GM12878 (cell line): ENCODE measurements at regions of chr7 and their contacts with region 1.

Region 1: DNA sequence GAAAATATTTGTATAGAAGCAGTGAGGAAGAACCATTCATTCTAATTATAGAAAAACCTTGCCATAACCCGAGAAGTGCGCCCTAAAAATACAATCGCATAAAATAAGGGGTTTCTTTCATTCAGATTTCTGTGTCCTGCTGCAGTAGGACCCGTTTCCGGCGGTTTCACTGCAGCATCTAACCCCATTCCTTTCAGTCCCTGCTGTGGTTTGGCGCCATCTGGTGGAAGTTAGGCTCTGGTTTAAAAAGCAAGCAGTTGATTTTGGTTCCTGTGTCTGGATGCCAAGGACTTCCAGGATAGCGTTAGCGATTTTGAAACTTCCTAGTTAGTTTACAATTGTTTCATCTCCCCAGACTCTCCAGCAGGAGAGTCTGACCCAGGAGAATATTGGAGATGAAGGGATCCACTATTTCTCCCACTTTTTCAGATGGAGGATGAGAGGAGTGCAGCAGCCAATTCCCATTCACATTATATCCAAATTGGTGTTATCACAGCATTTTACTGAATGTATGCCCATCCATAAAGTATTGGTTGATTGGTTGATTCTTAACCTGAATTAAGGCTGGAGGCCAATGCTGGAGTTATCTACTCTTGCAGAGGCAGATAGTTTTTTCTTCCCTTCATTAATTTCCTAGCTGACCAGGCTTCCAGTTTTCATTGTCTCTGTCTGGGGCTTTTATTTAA is 128.8 kb upstream of the CACNA2D1 start:
- DNase-seq: peak; percentile 11
- ATAC-seq: peak; percentile 77
- H3K4me3 ChIP-seq: no peak overlapping the region
- H3K27ac ChIP-seq: no peak overlapping the region
- H3K4me1 ChIP-seq: no peaks in the 10 kb centered on the region
- H3K27me3 ChIP-seq: no peaks in the 10 kb centered on the region
- CTCF ChIP-seq: peak; percentile 79 to 89 (median 85)
- EP300 ChIP-seq: no peak
- POLR2A ChIP-seq: no peak
- RAD21 ChIP-seq: peak; percentile 92

Region 2: GRCh38 chr7:82049891-82050533 is 522.3 kb before region 1 on chr7:
- CTCF ChIA-PET with region 1: interaction called, 71 read pairs
- POLR2A ChIA-PET with region 1: no interaction called
- RAD21 ChIA-PET with region 1: interaction called, 37 read pairs
- SMC1A ChIA-PET with region 1: interaction called, 48 read pairs
- in situ Hi-C with region 1: no loop called
- intact Hi-C with region 1: no loop called
- DNase-seq: no peak
- ATAC-seq: peak; percentile 70
- H3K4me3 ChIP-seq: no peak overlapping the region
- H3K27ac ChIP-seq: no peak overlapping the region
- H3K4me1 ChIP-seq: no peaks in the 10 kb centered on the region
- H3K27me3 ChIP-seq: no peaks in the 10 kb centered on the region
- CTCF ChIP-seq: no peak
- EP300 ChIP-seq: peak in 1 of 2 experiments; percentile 8; a peak in 1 of 4 replicates
- POLR2A ChIP-seq: no peak
- RAD21 ChIP-seq: no peak

Region 3: DNA sequence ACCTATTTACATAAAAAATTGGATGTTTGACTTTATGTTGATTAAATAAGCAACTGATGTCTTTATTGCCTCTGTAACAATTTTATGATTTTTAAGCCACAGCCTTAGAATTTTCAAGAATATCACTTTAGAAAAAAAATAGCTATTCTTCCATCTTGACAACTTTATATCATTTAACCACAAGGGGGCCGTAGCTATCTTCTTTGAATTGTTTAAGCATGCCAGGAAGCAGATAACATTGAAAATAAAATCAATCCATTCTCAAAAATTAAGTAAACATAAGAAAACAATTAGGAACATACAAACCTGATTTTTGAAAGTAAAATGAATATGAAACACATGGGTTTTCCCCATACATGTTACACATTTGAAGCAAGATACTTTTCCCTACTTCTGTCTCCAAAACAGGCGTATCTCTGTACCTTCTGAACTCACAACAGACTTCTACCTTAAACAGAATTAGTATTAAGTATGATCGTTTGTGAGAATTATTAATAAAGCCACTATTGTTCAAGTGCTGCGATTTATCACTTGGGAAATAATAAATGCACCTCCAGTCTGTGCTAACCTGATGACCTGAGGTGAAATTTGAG is 337.8 kb before region 1 on chr7:
- CTCF ChIA-PET with region 1: interaction called, 43 read pairs
- POLR2A ChIA-PET with region 1: no interaction called
- RAD21 ChIA-PET with region 1: interaction called, 26 read pairs
- SMC1A ChIA-PET with region 1: interaction called, 29 read pairs
- in situ Hi-C with region 1: loop called (anchors 10 kb)
- intact Hi-C with region 1: loop called (anchors 1 kb)
- DNase-seq: no peak
- ATAC-seq: peak; percentile 60
- H3K4me3 ChIP-seq: no peak overlapping the region
- H3K27ac ChIP-seq: no peak overlapping the region
- H3K4me1 ChIP-seq: no peaks in the 10 kb centered on the region
- H3K27me3 ChIP-seq: no peaks in the 10 kb centered on the region
- CTCF ChIP-seq: peak; percentile 34 to 51 (median 49); a peak in 5 of 6 replicates
- EP300 ChIP-seq: no peak
- POLR2A ChIP-seq: no peak
- RAD21 ChIP-seq: peak; percentile 69

Region 4: DNA sequence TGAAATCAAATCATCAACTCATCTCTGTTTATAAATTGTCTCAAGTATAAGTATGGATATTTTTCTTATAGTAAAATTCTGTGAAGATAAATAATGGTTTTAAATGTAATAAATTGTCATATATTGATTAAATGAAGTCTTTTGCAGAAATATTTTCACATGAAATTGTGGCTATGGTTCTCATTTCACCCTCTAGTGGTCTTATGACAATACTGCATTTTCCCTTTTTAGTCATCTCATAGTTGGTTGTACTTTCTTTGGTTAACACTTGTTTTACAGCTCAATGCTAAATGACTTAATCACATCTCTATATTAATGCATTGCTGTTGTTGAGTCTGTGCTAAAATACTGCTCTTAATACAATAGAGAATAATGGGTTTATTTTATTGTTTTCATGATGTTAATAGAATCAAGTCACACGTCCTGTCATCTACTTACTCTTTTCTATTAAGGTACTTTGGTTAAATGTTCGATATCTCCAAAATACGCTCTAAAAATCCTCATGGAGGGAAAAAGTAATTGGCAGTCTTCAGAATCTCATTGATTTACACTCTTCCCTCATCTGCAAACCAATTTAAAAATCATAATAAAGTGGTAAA is 90.7 kb before region 1 on chr7:
- CTCF ChIA-PET with region 1: interaction called, 34 read pairs
- POLR2A ChIA-PET with region 1: no interaction called
- RAD21 ChIA-PET with region 1: interaction called, 23 read pairs
- SMC1A ChIA-PET with region 1: interaction called, 18 read pairs
- in situ Hi-C with region 1: no loop called
- intact Hi-C with region 1: loop called (anchors 5 kb)
- DNase-seq: peak; percentile 0
- ATAC-seq: peak; percentile 86
- H3K4me3 ChIP-seq: no peak overlapping the region
- H3K27ac ChIP-seq: no peak overlapping the region
- H3K4me1 ChIP-seq: no peaks in the 10 kb centered on the region
- H3K27me3 ChIP-seq: no peaks in the 10 kb centered on the region
- CTCF ChIP-seq: peak; percentile 56 to 62 (median 56)
- EP300 ChIP-seq: no peak
- POLR2A ChIP-seq: no peak
- RAD21 ChIP-seq: peak; percentile 56

Region 5: GRCh38 chr7:82594665-82595064 is 22.3 kb after region 1 on chr7:
- CTCF ChIA-PET with region 1: interaction called, 14 read pairs
- POLR2A ChIA-PET with region 1: no interaction called
- RAD21 ChIA-PET with region 1: interaction called, 5 read pairs
- SMC1A ChIA-PET with region 1: interaction called, 10 read pairs
- in situ Hi-C with region 1: no loop called
- intact Hi-C with region 1: no loop called
- DNase-seq: no peak
- ATAC-seq: no peak; the same call in 2 of the 3 replicates
- H3K4me3 ChIP-seq: no peak overlapping the region
- H3K27ac ChIP-seq: no peak overlapping the region
- H3K4me1 ChIP-seq: no peaks in the 10 kb centered on the region
- H3K27me3 ChIP-seq: no peaks in the 10 kb centered on the region
- CTCF ChIP-seq: no peak
- EP300 ChIP-seq: no peak
- POLR2A ChIP-seq: no peak
- RAD21 ChIP-seq: no peak

Region 6: DNA sequence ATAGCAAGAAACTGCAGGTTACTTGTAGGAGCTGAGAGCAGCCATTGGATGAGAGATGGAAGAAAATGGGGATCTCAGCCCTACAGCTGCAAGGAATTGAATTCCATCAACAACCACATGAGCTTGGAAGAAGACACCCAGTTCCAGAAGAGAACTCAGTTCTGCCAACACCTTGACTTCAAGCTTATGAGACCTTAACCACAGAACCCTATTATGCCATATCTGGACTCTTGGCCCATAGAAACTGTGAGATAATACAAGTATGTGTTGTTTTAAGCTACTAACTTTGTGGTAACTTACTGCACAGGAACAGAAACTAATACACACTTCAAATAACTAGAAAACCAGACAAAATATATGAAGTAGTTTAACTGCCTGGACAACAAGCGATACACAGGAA is 83.6 kb after region 1 on chr7:
- CTCF ChIA-PET with region 1: no interaction called
- POLR2A ChIA-PET with region 1: no interaction called
- RAD21 ChIA-PET with region 1: no interaction called
- SMC1A ChIA-PET with region 1: no interaction called
- in situ Hi-C with region 1: no loop called
- intact Hi-C with region 1: no loop called
- DNase-seq: no peak
- ATAC-seq: peak; percentile 40
- H3K4me3 ChIP-seq: no peak overlapping the region
- H3K27ac ChIP-seq: no peak overlapping the region
- H3K4me1 ChIP-seq: no peaks in the 10 kb centered on the region
- H3K27me3 ChIP-seq: no peaks in the 10 kb centered on the region; a peak in 1 of 4 replicates
- CTCF ChIP-seq: no peak
- EP300 ChIP-seq: no peak
- POLR2A ChIP-seq: no peak
- RAD21 ChIP-seq: no peak

Region 7: DNA sequence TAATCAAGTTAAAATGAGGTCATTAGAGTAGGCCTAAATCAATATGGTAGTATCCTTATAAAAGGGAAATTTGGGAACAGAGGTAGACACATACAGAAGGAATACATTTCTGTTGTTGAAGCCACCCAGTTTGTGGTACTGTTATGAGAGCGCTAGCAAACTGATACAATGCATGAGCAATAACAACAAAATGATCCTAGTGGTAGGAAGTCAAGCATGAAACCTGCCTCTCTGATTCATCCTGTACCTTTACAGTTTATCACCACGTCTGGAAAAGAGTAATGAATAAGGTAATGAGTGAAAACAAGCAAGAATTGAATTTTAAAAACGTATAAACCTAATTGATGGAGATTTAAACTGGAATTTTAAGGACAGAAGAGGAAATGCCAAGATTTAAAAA is 373.1 kb after region 1 on chr7:
- CTCF ChIA-PET with region 1: no interaction called
- POLR2A ChIA-PET with region 1: no interaction called
- RAD21 ChIA-PET with region 1: no interaction called
- SMC1A ChIA-PET with region 1: no interaction called
- in situ Hi-C with region 1: no loop called
- intact Hi-C with region 1: no loop called
- DNase-seq: no peak
- ATAC-seq: no peak
- H3K4me3 ChIP-seq: no peak overlapping the region
- H3K27ac ChIP-seq: no peak overlapping the region
- H3K4me1 ChIP-seq: no peaks in the 10 kb centered on the region
- H3K27me3 ChIP-seq: no peaks in the 10 kb centered on the region
- CTCF ChIP-seq: no peak
- EP300 ChIP-seq: no peak
- POLR2A ChIP-seq: no peak
- RAD21 ChIP-seq: no peak